ENCODE measurements at regions of chr10 and their contacts with region 1.

Region 1: GRCh38 chr10:132223156-132223590 is 36.4 kb downstream of the DPYSL4 start:
- DNase-seq: peak; percentile 92
- H3K4me3 Mint-ChIP-seq: no peak overlapping the region
- H3K27ac Mint-ChIP-seq: no peak overlapping the region
- H3K4me1 Mint-ChIP-seq: peaks cover 6% of the 10 kb centered on the region
- H3K27me3 Mint-ChIP-seq: no peaks in the 10 kb centered on the region

Region 2: GRCh38 chr10:132175907-132176581 is 47.1 kb before region 1 on chr10:
- intact Hi-C with region 1: no loop called
- DNase-seq: no peak
- H3K4me3 Mint-ChIP-seq: no peak overlapping the region
- H3K27ac Mint-ChIP-seq: no peak overlapping the region
- H3K4me1 Mint-ChIP-seq: peaks cover 4% of the 10 kb centered on the region
- H3K27me3 Mint-ChIP-seq: peaks cover 22% of the 10 kb centered on the region

Region 3: GRCh38 chr10:132354356-132355094 is 131.4 kb after region 1 on chr10:
- intact Hi-C with region 1: loop called (anchors 1 kb)
- DNase-seq: no peak
- H3K4me3 Mint-ChIP-seq: no peak overlapping the region
- H3K27ac Mint-ChIP-seq: no peak overlapping the region
- H3K4me1 Mint-ChIP-seq: peaks cover 2% of the 10 kb centered on the region
- H3K27me3 Mint-ChIP-seq: no peaks in the 10 kb centered on the region

Region 4: GRCh38 chr10:132452631-132453469 is 229.7 kb after region 1 on chr10:
- intact Hi-C with region 1: loop called (anchors 1 kb)
- DNase-seq: peak; percentile 97
- H3K4me3 Mint-ChIP-seq: peak overlapping the region; percentile 64
- H3K27ac Mint-ChIP-seq: peak overlapping the region; percentile 56
- H3K4me1 Mint-ChIP-seq: peaks cover 11% of the 10 kb centered on the region
- H3K27me3 Mint-ChIP-seq: no peaks in the 10 kb centered on the region

Measured in activated CD4-positive, alpha-beta T cell treated with anti-CD3 and anti-CD28 coated beads, Interleukin-2, amount 10 ng/mL, durations not matched to agents 24 days and 14 days (primary cell).